ENCODE measurements at regions of chr15 and their contacts with region 1.

Region 1: GRCh38 chr15:65192016-65192415 is 6.9 kb upstream of the CLPX start:
- DNase-seq: no peak
- ATAC-seq: no peak
- H3K4me3 ChIP-seq: no peak overlapping the region
- H3K27ac ChIP-seq: no peak overlapping the region
- H3K4me1 ChIP-seq: no peaks in the 10 kb centered on the region
- H3K27me3 ChIP-seq: no peaks in the 10 kb centered on the region
- CTCF ChIP-seq: no peak
- POLR2A ChIP-seq: no peak

Region 2: DNA sequence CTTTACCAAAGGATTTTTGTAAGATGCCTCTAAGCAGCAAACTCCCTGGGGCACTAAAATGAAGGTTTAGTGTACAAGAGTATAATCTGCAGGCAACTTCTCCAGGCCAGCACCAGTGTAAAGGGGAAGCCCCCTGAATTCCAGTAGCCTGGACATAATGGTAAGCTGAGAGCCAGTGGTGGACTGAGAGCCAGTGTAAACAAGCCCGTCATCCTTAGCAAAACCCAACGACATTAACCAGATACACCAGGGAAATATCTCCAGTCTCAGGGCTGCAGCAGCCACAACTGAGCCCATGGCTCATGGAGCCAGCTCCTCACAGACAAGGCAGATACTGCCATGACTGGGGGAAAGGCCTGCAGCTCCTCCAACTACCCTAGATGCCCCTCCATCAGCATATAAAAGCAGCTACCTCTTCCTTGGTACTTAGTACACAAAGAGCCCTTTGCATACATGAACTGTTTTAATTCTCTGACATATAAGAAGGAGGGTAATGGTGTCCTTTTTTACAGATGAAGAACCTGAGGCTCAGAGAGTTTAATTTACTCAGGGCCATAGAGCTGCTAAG is 72.9 kb after region 1 on chr15:
- in situ Hi-C with region 1: loop called (anchors 5 to 10 kb)
- intact Hi-C with region 1: no loop called
- DNase-seq: no peak
- ATAC-seq: no peak
- H3K4me3 ChIP-seq: no peak overlapping the region
- H3K27ac ChIP-seq: no peak overlapping the region
- H3K4me1 ChIP-seq: no peaks in the 10 kb centered on the region
- H3K27me3 ChIP-seq: no peaks in the 10 kb centered on the region
- CTCF ChIP-seq: no peak
- POLR2A ChIP-seq: no peak

Region 3: GRCh38 chr15:65275728-65276126 is 83.7 kb after region 1 on chr15:
- in situ Hi-C with region 1: loop called in 2 of 4 experiments (anchors 5 to 10 kb)
- intact Hi-C with region 1: loop called (anchors 1 kb)
- DNase-seq: no peak
- ATAC-seq: no peak
- H3K4me3 ChIP-seq: no peak overlapping the region
- H3K27ac ChIP-seq: no peak overlapping the region
- H3K4me1 ChIP-seq: peaks cover 2 to 5% of the 10 kb centered on the region in 2 donors
- H3K27me3 ChIP-seq: no peaks in the 10 kb centered on the region
- CTCF ChIP-seq: no peak
- POLR2A ChIP-seq: no peak

Measured in gastrocnemius medialis (tissue), 4 donors.